ENCODE measurements at regions of chr10 and their contacts with region 1.

Region 1: GRCh38 chr10:69408318-69409175 is 8.2 kb downstream of the TACR2 start:
- DNase-seq: peak; percentile 96
- H3K4me3 ChIP-seq: peak overlapping the region; percentile 46
- H3K27ac ChIP-seq: peak overlapping the region; percentile 53
- H3K4me1 ChIP-seq: peaks cover 16% of the 10 kb centered on the region
- H3K27me3 ChIP-seq: no peaks in the 10 kb centered on the region
- CTCF ChIP-seq: peak; percentile 65

Region 2: GRCh38 chr10:68988530-68989316 is 419.8 kb before region 1 on chr10 and contains the start of gene KIFBP:
- CTCF ChIA-PET with region 1: no interaction called
- POLR2A ChIA-PET with region 1: no interaction called
- intact Hi-C with region 1: loop called (anchors 10 kb)
- DNase-seq: peak; percentile 99
- H3K4me3 ChIP-seq: peak within 1 kb of the TSS; percentile 79
- H3K27ac ChIP-seq: peak within 1 kb of the TSS; percentile 78
- H3K4me1 ChIP-seq: peaks cover 8% of the 10 kb centered on the region
- H3K27me3 ChIP-seq: no peaks in the 10 kb centered on the region
- CTCF ChIP-seq: peak; percentile 65
- total RNA-seq, gene KIFBP: 40.5 and 42.8 TPM in 2 replicates

Region 3: DNA sequence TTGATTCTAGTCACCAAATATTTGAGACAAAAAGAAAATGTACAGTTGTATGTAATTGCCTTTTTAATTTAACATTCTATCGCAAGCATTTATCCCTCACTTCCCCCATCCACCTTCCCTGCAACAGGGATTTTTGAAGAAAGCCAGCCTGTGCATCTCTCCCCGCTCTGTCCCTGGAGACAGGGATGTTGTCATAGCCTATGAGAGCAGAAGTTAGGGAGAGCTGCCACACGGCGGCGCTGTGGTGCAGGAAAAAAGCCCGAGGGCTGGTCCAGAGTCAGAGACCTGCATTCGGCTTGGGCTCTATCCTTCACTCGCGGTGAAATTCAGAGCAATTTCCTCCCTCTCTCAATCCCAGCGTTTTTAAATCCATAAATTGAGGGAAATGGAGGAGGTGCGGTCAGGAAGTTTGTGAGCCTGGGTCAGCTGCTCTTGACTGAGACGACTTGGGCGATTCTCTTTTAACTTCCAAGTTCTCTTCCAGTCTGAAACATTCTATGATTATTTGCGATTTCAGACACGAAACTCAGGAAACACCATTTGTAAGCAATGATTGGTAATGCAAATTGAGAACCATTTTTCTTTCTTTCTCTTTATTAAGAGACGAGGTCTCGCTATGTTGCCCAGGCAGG is 170.9 kb before region 1 on chr10:
- CTCF ChIA-PET with region 1: interaction called, 7 read pairs
- POLR2A ChIA-PET with region 1: no interaction called
- intact Hi-C with region 1: loop called (anchors 5 kb)
- DNase-seq: peak; percentile 91
- H3K4me3 ChIP-seq: no peak overlapping the region
- H3K27ac ChIP-seq: no peak overlapping the region
- H3K4me1 ChIP-seq: peaks cover 10% of the 10 kb centered on the region
- H3K27me3 ChIP-seq: no peaks in the 10 kb centered on the region
- CTCF ChIP-seq: peak; percentile 93

Region 4: DNA sequence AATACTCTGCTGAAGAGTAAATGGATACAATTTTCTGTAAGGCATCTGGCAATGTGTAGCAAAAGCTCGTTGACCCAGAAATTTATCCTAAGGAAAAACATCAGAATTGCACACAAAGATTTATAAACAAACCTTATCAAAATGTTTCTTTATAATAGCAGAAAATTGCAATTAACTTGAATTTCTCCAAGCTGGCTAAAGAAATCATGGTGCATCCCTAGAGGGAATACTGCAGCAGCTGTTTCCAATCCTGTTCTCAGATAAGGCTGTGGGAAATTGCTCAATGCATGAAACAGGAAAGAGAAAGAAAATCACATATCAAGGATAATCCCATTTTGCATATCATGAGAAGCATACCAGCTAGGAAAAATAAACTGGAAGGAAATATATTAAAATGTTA is 10.6 kb before region 1 on chr10:
- CTCF ChIA-PET with region 1: interaction called, 12 read pairs
- POLR2A ChIA-PET with region 1: no interaction called
- intact Hi-C with region 1: no loop called
- DNase-seq: peak; percentile 78
- H3K4me3 ChIP-seq: no peak overlapping the region
- H3K27ac ChIP-seq: peak overlapping the region; percentile 45
- H3K4me1 ChIP-seq: peaks cover 22% of the 10 kb centered on the region
- H3K27me3 ChIP-seq: no peaks in the 10 kb centered on the region
- CTCF ChIP-seq: no peak

Region 5: DNA sequence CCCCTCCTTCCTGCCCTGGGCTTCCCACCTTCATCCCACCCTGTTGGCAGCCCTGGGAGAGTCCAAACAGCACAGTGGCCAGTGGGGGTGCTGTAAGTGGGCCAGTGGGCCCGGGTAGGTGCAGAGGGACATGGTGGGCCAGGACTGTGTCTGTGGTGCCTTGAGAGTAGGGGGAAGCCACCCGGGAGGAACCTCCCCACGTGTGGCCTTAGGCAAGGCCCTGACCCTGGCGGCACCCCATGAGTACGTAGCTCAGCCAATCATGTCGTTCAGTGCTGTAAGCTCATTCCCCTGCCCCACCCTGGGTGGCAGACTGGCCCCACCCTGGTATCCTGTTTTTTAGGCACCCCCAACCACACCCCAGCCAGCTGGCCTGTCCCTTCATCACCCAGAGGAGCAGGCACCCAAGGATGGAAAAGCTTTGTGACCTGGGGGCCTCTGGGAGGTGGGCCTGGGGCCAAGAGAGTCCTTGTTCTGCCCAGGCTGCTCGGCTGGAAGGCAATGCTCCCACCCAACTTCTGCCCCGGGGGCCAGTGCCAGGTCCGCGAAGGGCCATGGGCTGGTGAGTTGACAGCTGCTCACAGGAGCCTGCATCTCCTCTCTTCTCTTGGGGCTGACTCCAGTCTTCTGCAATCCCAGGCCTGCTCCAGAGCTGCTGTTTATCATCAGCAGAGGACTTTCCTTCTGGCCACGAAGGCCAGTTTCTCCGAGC is 84.4 kb after region 1 on chr10:
- CTCF ChIA-PET with region 1: interaction called, 10 read pairs
- POLR2A ChIA-PET with region 1: no interaction called
- intact Hi-C with region 1: no loop called
- DNase-seq: no peak
- H3K4me3 ChIP-seq: no peak overlapping the region
- H3K27ac ChIP-seq: no peak overlapping the region
- H3K4me1 ChIP-seq: no peaks in the 10 kb centered on the region
- H3K27me3 ChIP-seq: no peaks in the 10 kb centered on the region
- CTCF ChIP-seq: no peak

Region 6: DNA sequence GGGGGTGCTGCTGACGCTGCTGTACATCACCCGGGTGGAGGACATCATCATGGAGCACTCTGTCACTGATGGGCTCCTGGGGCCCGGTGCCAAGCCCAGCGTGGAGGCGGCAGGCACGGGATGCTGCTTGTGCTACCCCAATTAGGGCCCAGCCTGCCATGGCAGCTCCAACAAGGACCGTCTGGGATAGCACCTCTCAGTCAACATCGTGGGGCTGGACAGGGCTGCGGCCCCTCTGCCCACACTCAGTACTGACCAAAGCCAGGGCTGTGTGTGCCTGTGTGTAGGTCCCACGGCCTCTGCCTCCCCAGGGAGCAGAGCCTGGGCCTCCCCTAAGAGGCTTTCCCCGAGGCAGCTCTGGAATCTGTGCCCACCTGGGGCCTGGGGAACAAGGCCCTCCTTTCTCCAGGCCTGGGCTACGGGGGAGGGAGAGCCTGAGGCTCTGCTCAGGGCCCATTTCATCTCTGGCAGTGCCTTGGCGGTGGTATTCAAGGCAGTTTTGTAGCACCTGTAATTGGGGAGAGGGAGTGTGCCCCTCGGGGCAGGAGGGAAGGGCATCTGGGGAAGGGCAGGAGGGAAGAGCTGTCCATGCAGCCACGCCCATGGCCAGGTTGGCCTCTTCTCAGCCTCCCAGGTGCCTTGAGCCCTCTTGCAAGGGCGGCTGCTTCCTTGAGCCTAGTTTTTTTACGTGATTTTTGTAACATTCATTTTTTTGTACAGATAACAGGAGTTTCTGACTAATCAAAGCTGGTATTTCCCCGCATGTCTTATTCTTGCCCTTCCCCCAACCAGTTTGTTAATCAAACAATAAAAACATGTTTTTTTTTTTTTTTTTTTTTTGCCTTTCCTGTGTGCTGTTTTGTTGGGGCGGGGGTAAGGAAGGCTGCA is 98.5 kb after region 1 on chr10:
- CTCF ChIA-PET with region 1: interaction called, 16 read pairs
- POLR2A ChIA-PET with region 1: no interaction called
- intact Hi-C with region 1: loop called (anchors 1 kb)
- DNase-seq: no peak
- H3K4me3 ChIP-seq: peak overlapping the region; percentile 29
- H3K27ac ChIP-seq: no peak overlapping the region
- H3K4me1 ChIP-seq: no peaks in the 10 kb centered on the region
- H3K27me3 ChIP-seq: peaks cover 8% of the 10 kb centered on the region
- CTCF ChIP-seq: no peak

Region 7: GRCh38 chr10:70247360-70247759 is 838.8 kb after region 1 on chr10:
- CTCF ChIA-PET with region 1: no interaction called
- POLR2A ChIA-PET with region 1: no interaction called
- intact Hi-C with region 1: no loop called
- DNase-seq: no peak
- H3K4me3 ChIP-seq: no peak overlapping the region
- H3K27ac ChIP-seq: no peak overlapping the region
- H3K4me1 ChIP-seq: no peaks in the 10 kb centered on the region
- H3K27me3 ChIP-seq: no peaks in the 10 kb centered on the region
- CTCF ChIP-seq: no peak